CD4-positive, alpha-beta T cell (primary cell): ENCODE measurements at regions of chr17 and their contacts with region 1.

Region 1: DNA sequence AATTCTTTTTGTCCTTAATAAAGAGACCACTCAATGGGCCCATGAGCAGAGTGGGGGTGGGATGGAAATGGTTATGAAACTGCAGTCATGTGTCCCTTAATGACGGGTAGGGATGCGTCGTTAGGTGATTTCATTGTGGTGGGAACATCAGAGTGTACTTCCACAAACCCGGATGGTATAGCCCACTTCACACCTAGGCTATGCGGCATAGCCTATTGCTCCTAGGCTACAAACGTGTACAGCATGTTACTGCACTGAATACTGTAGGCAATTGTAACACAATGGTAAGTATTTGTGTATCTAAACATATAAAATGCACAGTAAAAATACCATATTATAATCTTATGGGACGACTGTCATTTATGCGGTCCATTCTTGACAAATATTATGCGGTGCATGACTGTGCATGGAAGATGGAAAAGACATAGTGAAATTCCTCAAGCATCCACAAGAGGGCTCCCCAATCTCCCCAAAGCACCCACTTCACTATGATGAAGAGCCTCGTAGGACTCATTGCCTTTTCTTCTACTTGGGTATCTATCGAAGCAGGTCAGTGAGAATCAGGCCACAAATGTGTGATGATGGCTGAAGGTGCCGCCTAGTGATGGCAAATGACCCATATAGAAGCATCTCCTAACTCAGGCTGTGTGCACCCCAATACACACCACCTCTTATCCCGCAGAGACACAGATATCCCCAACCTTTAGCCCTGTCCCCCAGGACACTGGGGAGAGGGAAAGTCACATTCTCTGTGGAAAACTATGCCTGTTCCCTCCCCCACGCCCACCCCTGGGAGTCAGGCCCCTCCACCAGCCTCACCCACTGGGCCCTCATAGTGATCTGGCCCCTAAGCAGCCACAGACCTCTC is 43.5 kb downstream of the TBX21 start:
- DNase-seq: peak in 7 of 14 experiments; percentile 12 to 74 (median 50)
- ATAC-seq: peak; percentile 89
- H3K4me3 ChIP-seq: no peak overlapping the region
- H3K4me3 Mint-ChIP-seq: no peak overlapping the region
- H3K27ac ChIP-seq: no peak overlapping the region
- H3K27ac Mint-ChIP-seq: no peak overlapping the region
- H3K4me1 ChIP-seq: peaks cover 4% of the 10 kb centered on the region
- H3K4me1 Mint-ChIP-seq: peaks cover 4% of the 10 kb centered on the region
- H3K27me3 ChIP-seq: peaks cover 19 to 27% of the 10 kb centered on the region in 2 experiments
- H3K27me3 Mint-ChIP-seq: peaks cover 69% of the 10 kb centered on the region
- CTCF ChIP-seq: peak; percentile 86

Region 2: DNA sequence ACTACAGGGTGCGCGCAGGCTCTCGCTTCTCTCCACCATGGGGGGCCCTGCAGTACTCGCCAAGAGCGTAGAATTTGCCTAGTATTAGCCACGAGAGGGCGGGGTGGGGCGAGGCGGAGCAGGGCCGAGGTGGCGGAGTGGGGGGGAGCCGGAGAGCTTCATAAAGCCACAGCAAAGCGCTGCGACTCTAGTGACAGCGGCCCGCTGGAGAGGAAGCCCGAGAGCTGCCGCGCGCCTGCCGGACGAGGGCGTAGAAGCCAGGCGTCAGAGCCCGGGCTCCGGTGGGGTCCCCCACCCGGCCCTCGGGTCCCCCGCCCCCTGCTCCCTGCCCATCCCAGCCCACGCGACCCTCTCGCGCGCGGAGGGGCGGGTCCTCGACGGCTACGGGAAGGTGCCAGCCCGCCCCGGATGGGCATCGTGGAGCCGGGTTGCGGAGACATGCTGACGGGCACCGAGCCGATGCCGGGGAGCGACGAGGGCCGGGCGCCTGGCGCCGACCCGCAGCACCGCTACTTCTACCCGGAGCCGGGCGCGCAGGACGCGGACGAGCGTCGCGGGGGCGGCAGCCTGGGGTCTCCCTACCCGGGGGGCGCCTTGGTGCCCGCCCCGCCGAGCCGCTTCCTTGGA is 43.4 kb before region 1 on chr17 and contains the start of gene TBX21:
- CTCF ChIA-PET with region 1: no interaction called
- POLR2A ChIA-PET with region 1: no interaction called
- intact Hi-C with region 1: loop called in 1 of 2 experiments (anchors 5 kb)
- DNase-seq: peak; percentile 79 to 95 (median 87)
- ATAC-seq: peak; percentile 91
- H3K4me3 ChIP-seq: peak within 1 kb of the TSS; percentile 90
- H3K4me3 Mint-ChIP-seq: peak within 1 kb of the TSS; percentile 95
- H3K27ac ChIP-seq: peak within 1 kb of the TSS in 1 of 2 donors; percentile 64
- H3K27ac Mint-ChIP-seq: peak within 1 kb of the TSS; percentile 85
- H3K4me1 ChIP-seq: peaks cover 67% of the 10 kb centered on the region
- H3K4me1 Mint-ChIP-seq: peaks cover 28% of the 10 kb centered on the region
- H3K27me3 ChIP-seq: peaks cover 0 to 2% of the 10 kb centered on the region in 2 experiments
- H3K27me3 Mint-ChIP-seq: peaks cover 11% of the 10 kb centered on the region
- CTCF ChIP-seq: peak; percentile 64
- total RNA-seq, gene TBX21: 10.6 to 12.3 TPM

Region 3: GRCh38 chr17:47802341-47803022 is 25.9 kb after region 1 on chr17:
- CTCF ChIA-PET with region 1: interaction called, 3 read pairs
- POLR2A ChIA-PET with region 1: no interaction called
- intact Hi-C with region 1: loop called (anchors 1 to 2 kb)
- DNase-seq: peak; percentile 37 to 74 (median 47)
- ATAC-seq: peak; percentile 97
- H3K4me3 ChIP-seq: no peak overlapping the region
- H3K4me3 Mint-ChIP-seq: no peak overlapping the region
- H3K27ac ChIP-seq: no peak overlapping the region
- H3K27ac Mint-ChIP-seq: no peak overlapping the region
- H3K4me1 ChIP-seq: peaks cover 5% of the 10 kb centered on the region
- H3K4me1 Mint-ChIP-seq: no peaks in the 10 kb centered on the region
- H3K27me3 ChIP-seq: no peaks in the 10 kb centered on the region
- H3K27me3 Mint-ChIP-seq: peaks cover 2% of the 10 kb centered on the region
- CTCF ChIP-seq: peak; percentile 66